Adrenal gland (tissue), 19 donors: ENCODE measurements at regions of chr1 and their contacts with region 1.

Region 1: DNA sequence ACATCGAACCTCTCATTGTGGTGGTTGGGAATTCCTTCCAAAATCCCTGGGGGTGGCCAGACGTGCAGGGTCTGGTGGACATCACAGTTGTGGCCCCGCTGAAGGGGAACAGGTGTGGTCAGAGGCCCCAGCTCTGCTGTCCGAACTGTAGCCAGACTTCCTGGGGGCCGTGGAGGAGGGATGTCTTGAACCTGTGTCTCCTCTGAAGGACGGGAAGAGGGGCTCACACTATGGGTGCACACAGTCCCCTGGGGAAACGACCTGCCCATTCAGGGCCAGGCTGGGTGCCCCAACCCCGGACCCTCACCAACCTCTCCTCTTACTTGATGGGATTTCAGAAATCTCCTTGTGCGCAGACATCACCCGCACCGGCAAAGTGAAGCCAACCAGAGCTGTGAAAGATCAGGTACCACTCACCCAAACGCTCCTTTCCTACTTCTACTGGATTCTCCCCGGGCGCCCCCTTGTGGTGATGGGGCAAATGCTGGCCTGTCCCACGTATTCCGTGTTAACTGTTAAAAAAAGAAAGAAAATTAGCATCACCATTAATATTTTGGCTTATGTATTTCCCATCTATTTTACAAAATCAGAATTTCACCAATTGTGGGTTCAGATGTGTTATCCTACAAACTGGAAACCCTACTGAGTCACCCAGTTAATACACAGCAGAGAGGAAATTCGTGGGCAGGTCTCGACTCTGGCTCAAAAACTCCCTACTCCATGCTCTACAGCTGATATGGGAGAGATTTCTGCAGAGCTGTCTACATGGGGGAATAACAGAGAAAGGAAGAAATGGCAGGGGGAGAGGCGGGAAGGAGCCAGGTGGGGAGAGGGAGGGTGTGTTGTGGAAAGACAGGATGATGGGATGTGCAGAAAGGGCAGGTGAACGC is 28.1 kb downstream of the PADI4 start:
- DNase-seq: peak; percentile 43 to 81 (median 68)
- H3K4me3 ChIP-seq: no peak overlapping the region
- H3K27ac ChIP-seq: no peak overlapping the region
- H3K4me1 ChIP-seq: no peaks in the 10 kb centered on the region
- H3K27me3 ChIP-seq: peaks cover 5% of the 10 kb centered on the region
- CTCF ChIP-seq: peak; percentile 57 to 77 (median 63)
- POLR2A ChIP-seq: no peak

Region 2: DNA sequence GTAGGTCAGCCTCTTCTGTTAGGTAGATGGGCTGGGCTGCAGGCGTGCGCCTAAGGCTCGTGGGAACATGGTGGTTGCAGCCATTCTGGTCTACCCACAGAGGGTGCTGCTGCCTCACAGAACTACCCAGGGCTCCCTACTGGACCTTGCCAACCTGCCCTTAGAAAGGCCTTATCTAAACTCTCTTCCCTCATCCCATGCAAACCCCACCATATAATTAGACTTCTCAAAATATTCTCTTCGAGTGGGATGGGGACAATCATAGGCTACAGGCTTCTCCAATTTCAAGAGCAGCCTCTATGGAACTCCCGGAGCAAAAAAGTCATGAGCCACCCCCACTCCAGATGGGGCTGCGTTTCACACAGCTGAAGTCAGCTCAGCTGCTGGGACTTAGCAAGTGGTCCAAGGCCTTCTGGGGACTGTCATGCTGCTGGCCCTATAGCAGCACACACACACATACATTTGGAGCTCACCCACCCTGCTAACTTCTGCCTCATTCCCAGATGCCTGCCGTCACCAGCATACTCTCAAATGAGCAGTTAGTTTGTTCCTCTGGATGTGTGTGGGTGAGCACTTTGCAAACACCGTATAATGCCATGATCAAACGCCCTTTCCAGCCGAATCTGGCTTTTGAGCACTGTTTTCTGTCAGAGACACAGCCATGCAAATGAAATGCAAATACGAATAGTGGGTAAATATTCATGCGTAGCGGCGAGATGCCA is 276.2 kb before region 1 on chr1:
- intact Hi-C with region 1: loop called in 1 of 2 experiments (anchors 5 kb)
- DNase-seq: peak; percentile 68 to 86 (median 78)
- H3K4me3 ChIP-seq: no peak overlapping the region
- H3K27ac ChIP-seq: no peak overlapping the region
- H3K4me1 ChIP-seq: peaks cover 0 to 6% of the 10 kb centered on the region in 2 donors
- H3K27me3 ChIP-seq: no peaks in the 10 kb centered on the region
- CTCF ChIP-seq: peak; percentile 50 to 89 (median 74)
- POLR2A ChIP-seq: no peak